ENCODE measurements at regions of chr13 and their contacts with region 1.

Region 1: DNA sequence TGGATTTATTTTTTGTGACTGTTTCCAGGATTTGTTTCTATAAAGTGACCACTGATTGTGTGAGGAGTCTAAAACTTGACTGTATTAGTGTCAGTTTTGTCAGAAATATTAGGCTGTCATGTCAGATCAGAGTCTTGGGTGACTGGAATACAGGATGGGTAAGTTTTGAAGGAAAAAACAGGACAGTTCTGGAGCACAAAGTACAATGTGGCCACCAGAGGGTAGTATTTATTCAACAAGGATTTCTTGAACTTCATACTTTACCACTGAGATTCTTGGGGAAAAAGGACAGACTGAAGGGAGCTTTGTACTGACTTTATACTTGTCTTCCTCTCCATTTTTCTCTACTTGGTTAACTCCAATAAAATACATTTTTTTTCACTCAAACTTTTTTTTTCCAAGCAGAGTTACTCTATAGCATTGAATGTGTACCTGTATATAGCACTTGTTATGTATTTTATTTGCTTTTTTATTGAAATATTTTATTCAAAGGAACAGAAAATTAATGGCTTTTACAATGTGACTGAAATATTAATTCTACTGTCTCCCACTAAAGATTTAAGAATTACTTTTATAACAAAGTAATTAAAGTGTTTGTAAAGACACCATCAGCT is 51.1 kb downstream of the LMO7 start:
- DNase-seq: no peak
- ATAC-seq: peak in 1 of 4 donors; percentile 28
- H3K4me3 ChIP-seq: no peak overlapping the region
- H3K27ac ChIP-seq: no peak overlapping the region
- H3K4me1 ChIP-seq: no peaks in the 10 kb centered on the region
- H3K27me3 ChIP-seq: no peaks in the 10 kb centered on the region
- CTCF ChIP-seq: peak in 11 of 12 donors; percentile 13 to 54 (median 36)
- POLR2A ChIP-seq: no peak

Region 2: GRCh38 chr13:75102001-75102716 is 585.1 kb before region 1 on chr13:
- intact Hi-C with region 1: no loop called
- DNase-seq: no peak
- ATAC-seq: no peak
- H3K4me3 ChIP-seq: no peak overlapping the region
- H3K27ac ChIP-seq: no peak overlapping the region
- H3K4me1 ChIP-seq: peaks cover 0 to 5% (median 0%) of the 10 kb centered on the region in 12 donors
- H3K27me3 ChIP-seq: no peaks in the 10 kb centered on the region
- CTCF ChIP-seq: no peak
- POLR2A ChIP-seq: no peak

Region 3: DNA sequence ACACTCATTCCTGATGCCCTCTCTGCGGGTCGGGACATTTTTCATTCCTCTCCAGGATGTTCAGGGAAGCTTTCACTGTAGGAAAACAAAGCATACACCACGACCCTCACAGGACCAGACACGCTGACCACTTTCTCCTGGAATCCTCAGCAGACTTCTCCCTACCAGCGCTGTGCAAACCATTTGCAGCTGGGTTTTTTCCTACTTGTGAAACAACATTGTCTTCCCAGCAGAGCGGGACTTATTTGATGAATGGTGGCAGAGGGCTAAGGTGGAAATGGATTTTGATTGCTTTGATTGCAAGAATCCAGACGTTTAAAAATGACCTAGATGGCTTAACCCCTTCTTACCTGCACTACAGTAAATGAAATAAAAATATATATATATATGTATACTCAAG is 471.2 kb before region 1 on chr13:
- intact Hi-C with region 1: no loop called
- DNase-seq: no peak
- ATAC-seq: no peak
- H3K4me3 ChIP-seq: no peak overlapping the region
- H3K27ac ChIP-seq: no peak overlapping the region
- H3K4me1 ChIP-seq: peaks cover 0 to 10% (median 0%) of the 10 kb centered on the region in 12 donors
- H3K27me3 ChIP-seq: peaks cover 0 to 4% (median 0%) of the 10 kb centered on the region in 9 donors
- CTCF ChIP-seq: no peak
- POLR2A ChIP-seq: no peak

Region 4: DNA sequence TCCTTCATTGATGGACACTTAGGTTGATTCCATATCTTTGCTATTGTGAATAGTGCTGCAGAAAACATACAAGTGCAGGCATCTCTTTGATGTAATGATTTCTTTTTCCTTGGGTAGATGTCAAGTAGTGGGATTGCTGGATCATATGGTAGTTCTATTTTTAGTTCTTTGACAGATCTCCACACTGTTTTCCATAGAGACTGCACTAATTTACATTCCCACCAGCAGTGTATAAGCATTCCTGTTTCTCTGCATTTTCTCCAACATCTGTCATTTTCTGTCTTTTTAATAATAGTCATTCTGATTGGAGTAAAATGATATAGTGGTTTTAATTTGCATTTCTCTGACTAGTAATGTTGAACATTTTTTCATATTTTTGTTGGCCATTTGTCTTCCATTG is 65.6 kb after region 1 on chr13:
- intact Hi-C with region 1: loop called in 1 of 10 experiments (anchors 10 kb)
- DNase-seq: no peak
- ATAC-seq: no peak
- H3K4me3 ChIP-seq: no peak overlapping the region
- H3K27ac ChIP-seq: no peak overlapping the region
- H3K4me1 ChIP-seq: peaks cover 0 to 18% (median 6%) of the 10 kb centered on the region in 12 donors
- H3K27me3 ChIP-seq: no peaks in the 10 kb centered on the region
- CTCF ChIP-seq: no peak
- POLR2A ChIP-seq: no peak

Region 5: DNA sequence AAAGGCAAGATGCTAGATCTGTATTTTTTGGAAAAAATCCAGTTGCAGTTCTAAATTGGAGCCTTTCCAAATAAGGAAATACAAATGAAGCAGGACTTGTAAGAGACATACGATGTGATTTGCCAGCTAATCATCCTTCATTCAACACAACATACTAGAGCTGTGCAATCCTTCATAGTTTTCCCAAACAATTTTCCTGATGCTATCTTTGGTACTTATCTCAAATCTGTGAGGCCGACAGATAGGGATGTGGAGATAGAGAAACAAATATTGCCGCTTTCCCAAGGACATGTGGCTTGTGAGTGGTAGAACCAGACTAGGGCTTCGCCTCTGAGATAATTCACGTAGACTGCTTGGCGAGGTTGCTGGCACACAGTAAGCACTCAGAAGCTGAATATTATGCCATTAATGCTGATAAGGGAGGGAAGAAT is 125.5 kb after region 1 on chr13:
- intact Hi-C with region 1: loop called in 4 of 10 experiments (anchors 10 kb)
- DNase-seq: no peak
- ATAC-seq: peak; percentile 30 to 66 (median 46)
- H3K4me3 ChIP-seq: peak overlapping the region in 1 of 12 donors; percentile 2
- H3K27ac ChIP-seq: peak overlapping the region in 10 of 12 donors; percentile 15 to 68 (median 36)
- H3K4me1 ChIP-seq: peaks cover 0 to 63% (median 32%) of the 10 kb centered on the region in 12 donors
- H3K27me3 ChIP-seq: no peaks in the 10 kb centered on the region
- CTCF ChIP-seq: no peak
- POLR2A ChIP-seq: no peak

Region 6: DNA sequence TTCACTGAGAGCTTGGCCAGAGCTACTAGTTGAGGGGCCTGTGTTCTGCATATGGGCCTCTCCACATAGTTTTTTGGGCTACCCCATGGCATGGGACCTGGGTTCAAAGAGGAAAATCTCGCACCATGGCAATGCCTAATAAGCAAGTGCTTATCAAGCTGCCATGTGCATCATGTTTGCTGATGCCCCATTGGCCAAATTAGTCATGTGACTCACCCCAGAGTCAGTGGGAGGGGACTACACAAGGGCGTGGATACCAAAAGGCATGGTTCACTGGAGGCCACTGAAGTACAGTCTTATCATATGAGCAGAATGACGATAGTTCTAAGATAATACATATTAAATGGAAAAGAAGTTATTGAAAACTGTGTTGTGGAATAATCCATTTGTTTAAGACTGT is 163.7 kb after region 1 on chr13:
- intact Hi-C with region 1: loop called in 2 of 10 experiments (anchors 10 kb)
- DNase-seq: no peak
- ATAC-seq: peak in 3 of 4 donors; percentile 20 to 60 (median 37)
- H3K4me3 ChIP-seq: no peak overlapping the region
- H3K27ac ChIP-seq: no peak overlapping the region
- H3K4me1 ChIP-seq: peaks cover 0 to 18% (median 0%) of the 10 kb centered on the region in 12 donors
- H3K27me3 ChIP-seq: no peaks in the 10 kb centered on the region
- CTCF ChIP-seq: no peak
- POLR2A ChIP-seq: no peak

Region 7: GRCh38 chr13:75870397-75870903 is 183.2 kb after region 1 on chr13:
- intact Hi-C with region 1: loop called in 3 of 10 experiments (anchors 5 to 10 kb)
- DNase-seq: no peak
- ATAC-seq: peak in 2 of 4 donors; percentile 29 to 45
- H3K4me3 ChIP-seq: peak overlapping the region in 11 of 12 donors; percentile 10 to 62 (median 45)
- H3K27ac ChIP-seq: no peak overlapping the region
- H3K4me1 ChIP-seq: peaks cover 0 to 8% (median 0%) of the 10 kb centered on the region in 12 donors
- H3K27me3 ChIP-seq: no peaks in the 10 kb centered on the region
- CTCF ChIP-seq: peak; percentile 66 to 84 (median 74)
- POLR2A ChIP-seq: no peak

Region 8: DNA sequence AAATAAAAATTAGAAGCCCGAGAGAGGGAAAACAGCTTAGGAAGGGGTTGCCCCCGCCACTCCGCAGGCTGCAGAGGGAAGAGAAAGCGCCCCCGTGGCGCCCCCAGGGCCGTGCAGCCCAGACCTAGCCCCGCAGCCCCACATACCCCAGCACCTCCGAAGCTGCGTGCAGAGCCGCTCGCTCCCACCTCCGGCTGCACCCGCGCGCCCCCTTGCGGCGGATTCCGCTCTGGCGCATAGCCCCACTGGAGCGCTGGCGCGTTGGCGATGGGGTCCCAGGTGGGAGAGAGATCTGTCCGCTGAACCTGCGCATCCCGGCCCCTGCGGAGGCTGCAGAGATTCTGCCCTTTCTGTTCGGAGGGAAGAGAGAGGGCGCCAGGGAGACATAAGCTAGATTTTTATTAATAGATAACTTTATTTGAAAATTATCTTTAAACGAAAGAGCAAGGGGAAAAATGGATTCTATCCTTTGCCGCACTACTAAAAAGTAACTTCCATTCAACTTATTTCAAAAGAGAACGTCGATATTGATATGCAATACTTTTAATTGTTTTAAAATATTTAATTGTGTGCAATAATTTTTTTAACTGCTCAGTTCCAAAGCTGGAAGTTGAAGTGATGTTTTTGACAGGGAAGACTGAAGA is 1292.9 kb after region 1 on chr13:
- intact Hi-C with region 1: loop called in 1 of 10 experiments (anchors 10 kb)
- DNase-seq: peak; percentile 72 to 92 (median 79)
- ATAC-seq: peak; percentile 91 to 98 (median 94)
- H3K4me3 ChIP-seq: peak overlapping the region in 10 of 12 donors; percentile 20 to 50 (median 33)
- H3K27ac ChIP-seq: no peak overlapping the region
- H3K4me1 ChIP-seq: peaks cover 0 to 11% (median 2%) of the 10 kb centered on the region in 12 donors
- H3K27me3 ChIP-seq: peaks cover 0 to 38% (median 6%) of the 10 kb centered on the region in 9 donors
- CTCF ChIP-seq: peak; percentile 93 to 100 (median 96)
- POLR2A ChIP-seq: no peak

Measured in heart left ventricle (tissue), 16 donors.